ENCODE measurements at regions of chr22 and their contacts with region 1.

Region 1: DNA sequence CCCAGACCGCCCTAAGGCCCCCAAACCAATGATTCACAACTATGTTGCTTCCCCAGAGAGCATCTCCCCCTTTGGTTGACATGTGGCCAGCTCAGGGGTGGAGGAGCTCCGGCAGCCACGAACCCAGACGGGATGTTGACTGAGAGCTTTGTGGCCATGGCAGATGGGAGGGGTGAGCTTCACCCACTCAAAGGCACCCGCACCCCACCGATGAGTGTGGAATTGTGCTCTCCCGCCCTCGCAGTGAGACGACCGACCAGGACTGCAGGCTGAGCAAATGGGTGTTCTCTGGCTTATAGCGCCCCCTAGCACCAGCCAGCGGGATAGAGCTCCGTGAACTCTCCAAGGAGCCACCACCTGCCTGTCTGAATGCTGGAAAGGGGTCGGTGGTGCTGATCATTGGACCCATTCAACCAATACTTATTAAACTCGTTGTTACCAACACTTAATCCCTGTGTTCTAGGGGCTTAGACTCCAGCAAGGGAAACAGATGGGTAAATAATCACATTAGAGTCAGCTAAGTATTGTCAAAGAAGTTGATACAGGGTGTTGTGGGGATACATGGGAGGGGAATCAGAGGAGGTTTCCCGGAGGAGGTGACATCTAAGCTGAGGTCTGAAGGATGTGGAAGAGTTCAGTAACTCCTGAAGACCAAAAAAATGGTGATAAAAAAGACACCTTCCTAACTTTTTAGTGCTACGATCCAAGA is 4.5 kb upstream of the TIMP3 start:
- DNase-seq: peak; percentile 76
- ATAC-seq: peak; percentile 94
- H3K4me3 Mint-ChIP-seq: no peak overlapping the region
- H3K27ac Mint-ChIP-seq: no peak overlapping the region
- H3K4me1 Mint-ChIP-seq: no peaks in the 10 kb centered on the region
- H3K27me3 Mint-ChIP-seq: peaks cover 25% of the 10 kb centered on the region
- CTCF ChIP-seq: peak; percentile 76

Region 2: GRCh38 chr22:32528984-32529982 is 267.7 kb before region 1 on chr22:
- CTCF ChIA-PET with region 1: interaction called, 54 read pairs
- POLR2A ChIA-PET with region 1: no interaction called
- intact Hi-C with region 1: loop called (anchors 5 kb)
- DNase-seq: peak; percentile 86
- ATAC-seq: peak; percentile 79
- H3K4me3 Mint-ChIP-seq: no peak overlapping the region
- H3K27ac Mint-ChIP-seq: no peak overlapping the region
- H3K4me1 Mint-ChIP-seq: no peaks in the 10 kb centered on the region
- H3K27me3 Mint-ChIP-seq: no peaks in the 10 kb centered on the region
- CTCF ChIP-seq: peak; percentile 63

Region 3: DNA sequence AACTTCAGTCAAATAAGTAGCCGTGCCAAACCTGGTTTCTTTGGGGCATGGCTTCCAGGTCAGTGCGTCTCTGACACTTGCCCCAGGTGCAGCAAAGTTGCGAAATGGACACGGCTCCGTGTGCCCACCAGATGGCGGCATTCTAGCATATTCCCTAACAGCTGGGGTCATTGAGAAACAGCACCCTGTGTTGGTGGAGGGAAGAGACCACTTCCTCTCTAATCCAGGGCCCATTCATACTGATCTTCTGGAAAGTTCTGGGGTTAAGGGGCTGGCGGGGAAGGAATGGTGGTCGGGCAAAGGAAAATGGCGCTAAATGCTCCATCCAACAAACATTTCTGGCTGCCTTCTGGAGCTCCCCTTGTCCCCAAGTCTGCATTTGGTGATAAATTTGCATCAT is 136.7 kb before region 1 on chr22:
- CTCF ChIA-PET with region 1: interaction called, 119 read pairs
- POLR2A ChIA-PET with region 1: interaction called, 9 read pairs
- intact Hi-C with region 1: loop called (anchors 2 kb)
- DNase-seq: peak; percentile 74
- ATAC-seq: no peak
- H3K4me3 Mint-ChIP-seq: no peak overlapping the region
- H3K27ac Mint-ChIP-seq: no peak overlapping the region
- H3K4me1 Mint-ChIP-seq: peaks cover 2% of the 10 kb centered on the region
- H3K27me3 Mint-ChIP-seq: peaks cover 6% of the 10 kb centered on the region
- CTCF ChIP-seq: peak; percentile 83

Region 4: GRCh38 chr22:32775957-32776356 is 21.1 kb before region 1 on chr22:
- CTCF ChIA-PET with region 1: interaction called, 21 read pairs
- POLR2A ChIA-PET with region 1: no interaction called
- intact Hi-C with region 1: no loop called
- DNase-seq: no peak
- ATAC-seq: no peak
- H3K4me3 Mint-ChIP-seq: no peak overlapping the region
- H3K27ac Mint-ChIP-seq: no peak overlapping the region
- H3K4me1 Mint-ChIP-seq: no peaks in the 10 kb centered on the region
- H3K27me3 Mint-ChIP-seq: peaks cover 8% of the 10 kb centered on the region
- CTCF ChIP-seq: no peak

Region 5: DNA sequence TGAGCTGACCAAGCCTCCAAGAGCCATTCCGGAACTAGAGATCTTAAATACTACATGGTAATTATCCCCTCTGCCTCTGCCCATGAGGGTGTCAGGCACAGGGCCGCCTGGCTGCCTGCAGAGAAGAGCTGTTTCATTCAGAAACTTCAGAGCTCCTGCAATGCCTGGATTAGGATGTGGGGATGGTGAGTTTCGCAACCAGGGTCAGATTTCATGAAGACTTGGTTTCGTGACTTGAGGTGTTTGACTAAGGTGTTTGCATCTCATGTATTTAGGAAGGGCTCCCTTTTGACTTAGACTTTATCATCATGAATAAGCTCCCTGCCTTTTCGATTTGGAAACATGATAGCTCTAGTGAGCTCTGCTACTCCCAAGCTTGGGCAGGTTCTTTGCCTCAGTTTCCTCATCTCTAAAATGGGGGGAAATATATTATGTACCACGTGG is 13.6 kb after region 1 on chr22:
- CTCF ChIA-PET with region 1: interaction called, 42 read pairs
- POLR2A ChIA-PET with region 1: no interaction called
- intact Hi-C with region 1: no loop called
- DNase-seq: no peak
- ATAC-seq: no peak
- H3K4me3 Mint-ChIP-seq: no peak overlapping the region
- H3K27ac Mint-ChIP-seq: no peak overlapping the region
- H3K4me1 Mint-ChIP-seq: no peaks in the 10 kb centered on the region
- H3K27me3 Mint-ChIP-seq: peaks cover 3% of the 10 kb centered on the region
- CTCF ChIP-seq: no peak

Region 6: GRCh38 chr22:32940736-32941135 is 143.7 kb after region 1 on chr22:
- CTCF ChIA-PET with region 1: no interaction called
- POLR2A ChIA-PET with region 1: no interaction called
- intact Hi-C with region 1: no loop called
- DNase-seq: no peak
- ATAC-seq: no peak
- H3K4me3 Mint-ChIP-seq: no peak overlapping the region
- H3K27ac Mint-ChIP-seq: no peak overlapping the region
- H3K4me1 Mint-ChIP-seq: no peaks in the 10 kb centered on the region
- H3K27me3 Mint-ChIP-seq: peaks cover 11% of the 10 kb centered on the region
- CTCF ChIP-seq: no peak